Activated CD4-positive, alpha-beta memory T cell treated with anti-CD3 and anti-CD28 coated beads for 36 hours (primary cell): ENCODE measurements at regions of chr14 and their contacts with region 1.

Region 1: DNA sequence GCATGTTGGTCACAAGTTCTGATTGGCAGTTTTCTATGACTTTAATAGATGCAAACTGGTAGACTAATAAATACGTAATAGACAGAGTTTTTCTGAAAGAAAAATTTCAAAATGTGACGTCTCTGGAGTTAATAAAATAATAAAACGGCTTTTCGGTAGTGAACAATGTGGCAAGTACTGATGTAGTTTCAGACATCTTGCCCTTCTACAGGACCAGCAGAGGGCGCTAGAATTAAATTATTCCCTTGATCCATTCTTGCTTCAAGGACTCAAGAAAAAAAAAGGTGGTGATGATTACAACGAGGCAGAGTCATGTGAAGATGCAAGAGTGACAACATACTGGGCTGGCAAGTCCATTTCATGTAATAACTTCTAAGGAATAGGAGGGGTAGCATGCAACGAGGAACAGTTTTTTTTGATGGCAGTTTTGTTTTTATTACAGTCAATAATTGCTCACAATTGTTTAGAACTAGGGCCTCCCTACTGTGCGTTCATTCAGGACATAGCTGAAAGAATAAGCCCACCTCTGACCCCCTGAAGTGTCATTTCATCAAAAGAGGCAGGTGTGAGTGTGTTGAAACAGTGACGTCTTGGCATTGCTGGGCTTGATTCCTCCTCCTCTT is 101.0 kb upstream of the GZMB start:
- DNase-seq: peak; percentile 17
- H3K4me3 Mint-ChIP-seq: no peak overlapping the region
- H3K27ac Mint-ChIP-seq: no peak overlapping the region
- H3K4me1 Mint-ChIP-seq: no peaks in the 10 kb centered on the region
- H3K27me3 Mint-ChIP-seq: no peaks in the 10 kb centered on the region

Region 2: DNA sequence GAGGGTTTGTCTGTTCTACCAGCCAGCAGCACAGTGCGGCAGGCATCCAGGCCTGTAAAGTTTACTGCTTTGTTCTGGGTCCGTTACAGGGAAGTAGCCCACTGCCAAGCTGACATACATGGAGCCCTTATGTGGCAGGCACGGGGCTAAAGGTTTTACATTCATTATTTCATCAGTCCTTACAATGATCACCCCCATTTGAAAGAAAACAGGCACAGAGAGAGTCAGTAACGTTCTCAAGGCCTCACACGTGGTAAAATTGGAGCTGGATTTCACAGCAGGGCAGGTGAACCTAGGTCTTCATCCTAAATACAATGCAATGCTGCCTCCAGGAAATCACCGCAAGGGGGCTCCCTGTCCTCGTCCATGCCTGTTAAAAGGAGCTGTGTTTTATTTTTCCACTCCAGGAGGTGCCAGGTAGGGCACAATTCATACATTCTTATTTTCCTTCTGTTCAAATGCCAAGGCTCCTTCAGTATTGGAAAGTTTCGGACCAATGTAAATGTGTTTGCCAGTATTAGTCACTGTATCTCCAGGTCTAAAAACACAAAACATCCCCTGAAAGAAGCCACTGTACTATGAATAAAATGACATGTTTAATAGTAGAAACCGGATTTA is 71.2 kb after region 1 on chr14:
- CTCF ChIA-PET with region 1: no interaction called
- POLR2A ChIA-PET with region 1: no interaction called
- intact Hi-C with region 1: no loop called
- DNase-seq: peak; percentile 56
- H3K4me3 Mint-ChIP-seq: no peak overlapping the region
- H3K27ac Mint-ChIP-seq: no peak overlapping the region
- H3K4me1 Mint-ChIP-seq: no peaks in the 10 kb centered on the region
- H3K27me3 Mint-ChIP-seq: peaks cover 2% of the 10 kb centered on the region

Region 3: DNA sequence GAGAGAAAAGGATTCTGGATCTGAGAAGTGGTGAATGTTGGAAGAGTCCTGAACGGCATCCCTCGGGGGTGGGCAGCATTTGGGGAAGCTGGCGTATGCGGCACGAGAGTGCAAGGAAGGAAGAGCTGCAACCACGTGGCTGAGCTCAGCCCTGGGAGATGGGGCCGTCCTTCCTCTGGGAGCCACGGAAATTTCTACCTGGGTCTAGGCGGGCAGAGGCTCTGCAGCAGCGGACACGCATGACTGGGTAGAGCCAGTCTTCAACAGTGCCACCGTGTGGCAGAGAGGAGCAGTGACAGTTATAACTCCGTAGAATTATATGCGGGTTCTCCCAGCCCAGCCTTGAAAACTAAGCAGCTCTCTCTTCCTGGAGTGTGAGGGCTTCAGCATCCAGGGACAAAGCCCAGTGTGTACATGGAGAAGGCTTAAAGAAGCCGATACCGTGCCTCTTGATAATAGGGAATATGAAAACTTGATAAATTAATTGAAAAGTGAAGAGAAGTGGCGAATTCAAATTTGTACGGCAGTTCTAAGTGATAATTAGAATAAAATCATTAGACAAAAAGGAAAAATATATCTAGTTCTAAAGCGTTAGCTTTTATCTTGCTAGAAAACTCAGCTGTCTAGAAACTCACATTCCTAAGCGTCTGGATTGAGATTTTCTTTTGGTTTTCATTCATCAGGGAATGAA is 397.9 kb after region 1 on chr14:
- CTCF ChIA-PET with region 1: interaction called, 4 read pairs
- POLR2A ChIA-PET with region 1: no interaction called
- intact Hi-C with region 1: loop called (anchors 2 kb)
- DNase-seq: peak; percentile 54
- H3K4me3 Mint-ChIP-seq: no peak overlapping the region
- H3K27ac Mint-ChIP-seq: no peak overlapping the region
- H3K4me1 Mint-ChIP-seq: peaks cover 3% of the 10 kb centered on the region
- H3K27me3 Mint-ChIP-seq: peaks cover 28% of the 10 kb centered on the region